ENCODE measurements at regions of chr20 and their contacts with region 1.

Region 1: GRCh38 chr20:2692036-2692885 is at the start of gene EBF4:
- DNase-seq: peak in 37 of 42 donors; percentile 32 to 86 (median 60)

Region 2: GRCh38 chr20:2596673-2597279 is 95.5 kb before region 1 on chr20:
- intact Hi-C with region 1: no loop called
- DNase-seq: no peak

Region 3: DNA sequence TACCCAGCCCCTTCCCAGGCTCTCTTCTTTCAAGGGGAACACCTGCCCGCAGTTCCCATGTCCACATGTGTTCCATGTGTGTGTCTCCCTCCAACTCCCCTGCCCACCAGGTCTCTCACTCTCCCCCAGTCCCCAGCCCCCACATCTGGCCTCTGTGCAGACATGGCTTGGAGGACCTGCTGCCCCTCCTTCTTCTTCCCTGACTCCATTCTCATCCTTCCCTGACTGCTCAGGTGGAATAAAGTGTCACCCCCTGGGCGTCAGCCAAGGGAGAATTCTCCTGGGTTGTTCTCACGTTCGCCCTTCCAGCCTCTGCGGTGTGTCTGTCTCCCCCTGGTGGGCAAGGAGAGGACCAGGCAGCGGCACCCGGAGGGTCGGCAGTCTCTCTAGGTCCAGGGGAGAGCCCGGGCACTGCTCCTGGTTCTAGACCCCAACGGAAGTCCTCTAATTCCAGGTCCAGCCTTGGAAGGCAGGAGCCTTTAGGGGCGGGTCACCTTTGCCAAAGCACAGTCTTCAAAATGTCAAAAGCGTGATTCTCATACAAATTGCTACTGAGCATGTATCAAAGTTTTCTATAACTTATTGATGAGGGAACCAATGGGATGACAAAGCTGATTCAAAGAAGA is 50.8 kb after region 1 on chr20:
- intact Hi-C with region 1: loop called (anchors 5 kb)
- DNase-seq: peak in 35 of 42 donors; percentile 33 to 83 (median 53)

Region 4: DNA sequence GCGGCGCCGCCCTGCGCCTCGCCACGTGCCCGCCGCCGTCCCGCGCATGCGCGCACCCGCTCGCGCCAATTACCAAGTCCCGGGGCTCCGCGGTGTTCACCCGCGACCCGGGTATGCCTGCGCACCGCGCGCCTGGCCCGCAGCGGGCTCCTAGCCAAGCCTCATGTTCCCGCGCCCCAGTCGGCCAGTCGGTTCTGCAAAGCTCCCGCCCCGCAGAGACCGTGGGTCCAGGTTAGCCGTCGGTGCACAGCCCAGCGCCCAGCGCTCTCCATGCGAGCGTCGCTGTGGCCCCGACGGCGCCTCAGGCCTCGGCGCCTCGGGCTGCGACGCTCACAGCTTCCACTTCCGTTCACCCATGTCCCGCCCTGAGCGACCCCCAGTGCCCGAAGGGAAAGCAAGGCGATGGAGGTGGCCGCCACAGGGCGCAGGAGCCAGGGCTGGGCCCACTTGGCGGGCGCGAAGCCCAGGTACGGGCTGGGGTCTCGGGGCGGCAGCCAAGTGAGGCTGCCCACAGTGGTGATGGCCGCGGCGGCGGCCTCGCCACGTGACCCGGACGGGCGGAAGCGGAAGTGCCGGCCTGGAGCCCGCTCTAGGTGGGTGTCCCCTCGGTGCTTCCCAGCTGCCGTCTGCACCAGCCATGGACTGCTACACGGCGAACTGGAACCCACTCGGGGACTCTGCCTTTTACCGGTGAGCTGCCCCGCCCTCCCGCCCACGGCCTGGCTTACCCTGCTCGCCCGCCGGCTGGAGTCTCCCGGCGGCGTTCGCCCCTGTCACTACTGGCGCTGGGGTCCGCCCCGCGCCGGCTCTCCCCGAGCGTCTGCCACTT is 148.1 kb after region 1 on chr20 and contains the starts of genes PCED1A and VPS16:
- intact Hi-C with region 1: loop called (anchors 10 kb)
- DNase-seq: peak; percentile 76 to 96 (median 92)